ENCODE measurements at regions of chr2 and their contacts with region 1.

Region 1: GRCh38 chr2:231642631-231643494 is 50.2 kb downstream of the TEX44 start:
- DNase-seq: peak; percentile 99
- ATAC-seq: peak; percentile 82
- H3K4me3 ChIP-seq: peak overlapping the region; percentile 36 to 46
- H3K27ac ChIP-seq: peak overlapping the region; percentile 100
- H3K4me1 ChIP-seq: peaks cover 49 to 74% of the 10 kb centered on the region in 2 experiments
- H3K27me3 ChIP-seq: no peaks in the 10 kb centered on the region
- CTCF ChIP-seq: no peak
- POLR2A ChIP-seq: peak; percentile 64
- RAD21 ChIP-seq: no peak

Region 2: DNA sequence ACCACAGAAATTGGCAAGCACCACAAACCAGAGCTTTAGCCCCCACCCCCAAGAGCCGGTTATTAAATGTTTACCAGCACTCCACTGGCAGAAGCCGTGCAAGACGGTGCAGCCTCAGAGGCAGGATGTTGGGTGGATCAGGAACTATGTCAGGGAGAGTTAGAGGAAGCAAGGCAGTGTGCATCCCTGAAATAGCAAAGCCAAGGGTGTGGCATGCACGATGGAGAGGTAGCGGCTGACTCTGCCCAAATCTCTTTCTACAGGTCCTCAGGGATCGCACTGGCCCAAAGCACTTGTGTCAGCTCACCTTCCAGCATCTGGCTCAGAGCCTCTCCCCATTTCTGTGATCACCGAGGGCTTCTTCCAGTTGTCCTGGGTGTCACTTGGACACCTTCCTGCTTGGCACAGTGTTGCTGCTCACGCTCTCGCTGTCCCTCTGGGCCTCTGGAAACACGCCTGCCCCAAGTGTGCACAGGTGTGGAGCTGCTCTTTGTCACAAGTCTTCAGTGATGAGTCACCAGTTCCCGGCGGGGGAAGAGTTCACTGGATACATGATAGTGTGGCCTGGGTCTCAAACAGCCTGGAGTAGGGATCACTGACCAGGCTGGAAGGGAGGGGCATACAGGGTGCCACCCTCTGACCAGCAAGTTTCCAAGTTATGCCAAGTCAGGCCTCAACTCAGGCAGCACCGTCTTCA is 264.7 kb before region 1 on chr2:
- CTCF ChIA-PET with region 1: no interaction called
- POLR2A ChIA-PET with region 1: no interaction called
- RAD21 ChIA-PET with region 1: no interaction called
- intact Hi-C with region 1: no loop called
- DNase-seq: no peak
- ATAC-seq: peak; percentile 70
- H3K4me3 ChIP-seq: no peak overlapping the region
- H3K27ac ChIP-seq: no peak overlapping the region
- H3K4me1 ChIP-seq: peaks cover 9 to 22% of the 10 kb centered on the region in 2 experiments; a peak in 3 of 4 replicates
- H3K27me3 ChIP-seq: no peaks in the 10 kb centered on the region
- CTCF ChIP-seq: no peak
- POLR2A ChIP-seq: no peak
- RAD21 ChIP-seq: no peak

Region 3: GRCh38 chr2:231621129-231621879 is 21.6 kb before region 1 on chr2:
- CTCF ChIA-PET with region 1: interaction called, 4 read pairs
- POLR2A ChIA-PET with region 1: interaction called, 16 read pairs
- RAD21 ChIA-PET with region 1: no interaction called
- intact Hi-C with region 1: loop called (anchors 2 kb)
- DNase-seq: peak; percentile 86
- ATAC-seq: peak; percentile 82
- H3K4me3 ChIP-seq: peak overlapping the region; percentile 23 to 48
- H3K27ac ChIP-seq: peak overlapping the region; percentile 74
- H3K4me1 ChIP-seq: peaks cover 59 to 74% of the 10 kb centered on the region in 2 experiments
- H3K27me3 ChIP-seq: no peaks in the 10 kb centered on the region
- CTCF ChIP-seq: no peak
- POLR2A ChIP-seq: no peak
- RAD21 ChIP-seq: no peak

Region 4: DNA sequence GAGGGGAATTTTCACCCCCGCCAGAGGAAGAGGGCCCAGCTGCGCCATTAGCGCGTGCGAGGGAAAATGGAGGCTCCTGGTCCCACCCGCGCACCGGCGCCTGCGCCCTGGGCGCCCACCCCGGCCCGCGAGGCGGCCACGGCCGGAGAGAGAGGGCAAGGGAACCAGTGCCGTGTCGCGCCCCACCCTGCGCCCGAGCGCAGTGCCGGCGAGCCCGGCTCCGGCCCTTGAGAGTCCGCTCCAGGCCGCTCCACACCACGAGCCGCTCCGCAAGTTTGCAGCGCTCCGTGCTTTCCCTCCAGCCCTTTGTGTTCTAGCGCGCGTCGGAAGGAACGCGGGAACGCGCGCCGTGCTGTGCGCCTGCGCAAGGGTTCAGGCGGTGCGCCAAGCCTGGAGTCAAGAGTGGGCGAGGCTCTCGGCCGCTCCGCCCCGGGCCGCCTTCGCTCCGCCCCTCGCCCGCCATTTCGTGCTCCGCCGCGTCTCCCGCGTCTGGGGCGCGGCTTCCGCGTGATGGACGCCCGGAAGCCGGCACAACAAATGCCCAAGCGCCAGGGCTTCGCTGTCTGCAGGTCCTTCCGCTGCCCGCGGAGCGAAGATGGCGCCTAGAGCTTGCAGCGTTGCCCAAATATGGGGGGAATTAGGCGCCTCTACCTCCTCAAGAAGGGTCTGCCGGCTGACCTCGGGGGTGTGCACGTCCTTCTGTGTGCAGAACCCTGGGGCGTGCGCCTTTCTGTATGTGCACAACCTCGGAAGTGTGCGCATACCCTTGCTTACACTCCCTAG is 19.4 kb after region 1 on chr2:
- CTCF ChIA-PET with region 1: interaction called, 4 read pairs
- POLR2A ChIA-PET with region 1: interaction called, 33 read pairs
- RAD21 ChIA-PET with region 1: interaction called, 3 to 4 read pairs
- intact Hi-C with region 1: loop called (anchors 1 kb)
- DNase-seq: peak; percentile 97
- ATAC-seq: peak; percentile 58
- H3K4me3 ChIP-seq: peak overlapping the region; percentile 56 to 62
- H3K27ac ChIP-seq: peak overlapping the region; percentile 99
- H3K4me1 ChIP-seq: peaks cover 25 to 75% of the 10 kb centered on the region in 2 experiments
- H3K27me3 ChIP-seq: no peaks in the 10 kb centered on the region
- CTCF ChIP-seq: no peak
- POLR2A ChIP-seq: no peak
- RAD21 ChIP-seq: no peak